ENCODE measurements at regions of chr5 and their contacts with region 1.

Region 1: DNA sequence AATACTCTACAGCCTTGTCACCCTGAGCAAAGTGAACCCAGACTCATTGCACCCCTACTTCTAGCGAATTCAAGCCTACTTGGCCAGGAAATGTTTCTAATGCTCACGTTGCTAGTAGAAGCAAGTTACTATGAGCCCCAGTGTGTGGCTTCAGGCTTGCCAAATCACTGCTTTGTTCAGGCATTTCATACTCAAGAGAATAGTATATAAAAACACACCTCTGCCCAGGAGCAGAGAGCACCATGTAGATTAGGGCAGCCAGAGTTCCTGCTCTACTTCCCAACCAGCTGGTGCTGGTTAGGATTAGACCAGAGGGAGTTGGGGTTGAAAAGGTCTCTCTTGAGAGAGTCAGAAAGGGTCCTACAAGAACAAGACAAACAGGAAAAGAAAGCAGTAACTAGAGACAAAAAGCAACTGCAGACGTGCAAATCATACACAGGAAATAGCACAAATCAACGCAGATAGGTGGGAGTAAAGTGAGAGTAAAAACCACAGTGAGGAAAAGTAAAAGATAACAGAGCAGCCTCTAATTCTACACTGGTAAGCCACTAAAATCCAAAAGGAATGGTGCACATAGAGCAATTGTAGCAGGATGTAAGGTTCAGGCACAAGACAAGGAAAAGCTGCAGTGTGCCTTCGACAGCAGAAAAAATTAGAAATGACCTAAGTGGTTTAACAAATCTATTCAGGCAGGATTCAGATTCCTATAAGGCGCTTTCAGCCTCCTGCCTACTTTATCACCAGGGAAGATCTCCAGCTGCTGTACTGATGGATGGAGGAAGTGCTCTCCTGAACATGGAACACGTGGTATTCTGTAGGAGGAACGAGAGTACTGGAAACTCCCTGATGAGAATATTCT is 49.6 kb upstream of the KIF2A start:
- DNase-seq: peak; percentile 18
- H3K4me3 Mint-ChIP-seq: peak overlapping the region; percentile 21
- H3K27ac Mint-ChIP-seq: peak overlapping the region; percentile 88
- H3K4me1 Mint-ChIP-seq: peaks cover 48% of the 10 kb centered on the region
- H3K27me3 Mint-ChIP-seq: no peaks in the 10 kb centered on the region

Region 2: DNA sequence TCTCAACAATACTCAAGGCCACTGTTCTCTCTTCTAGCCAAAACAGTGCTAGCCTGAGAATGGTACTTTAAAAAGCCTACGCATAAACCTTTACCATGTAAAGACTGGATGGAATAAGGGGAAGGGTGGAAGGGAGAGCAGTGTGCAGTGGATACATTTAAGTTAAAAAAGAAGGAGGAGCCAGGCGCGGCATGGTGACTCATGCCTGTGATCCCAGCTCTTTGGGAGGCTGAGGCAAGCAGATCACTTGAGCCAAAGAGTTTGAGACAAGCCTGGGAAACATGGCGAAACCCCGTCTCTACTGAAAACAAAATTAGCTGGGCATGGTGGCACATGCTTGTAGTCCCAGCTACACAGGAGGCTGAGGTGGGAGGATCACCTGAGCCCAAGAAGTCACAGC is 78.1 kb before region 1 on chr5:
- intact Hi-C with region 1: no loop called
- DNase-seq: no peak
- H3K4me3 Mint-ChIP-seq: no peak overlapping the region
- H3K27ac Mint-ChIP-seq: no peak overlapping the region
- H3K4me1 Mint-ChIP-seq: no peaks in the 10 kb centered on the region
- H3K27me3 Mint-ChIP-seq: peaks cover 9% of the 10 kb centered on the region

Region 3: GRCh38 chr5:62214701-62215100 is 41.7 kb before region 1 on chr5:
- intact Hi-C with region 1: no loop called
- DNase-seq: no peak
- H3K4me3 Mint-ChIP-seq: no peak overlapping the region
- H3K27ac Mint-ChIP-seq: no peak overlapping the region
- H3K4me1 Mint-ChIP-seq: no peaks in the 10 kb centered on the region
- H3K27me3 Mint-ChIP-seq: peaks cover 21% of the 10 kb centered on the region

Region 4: DNA sequence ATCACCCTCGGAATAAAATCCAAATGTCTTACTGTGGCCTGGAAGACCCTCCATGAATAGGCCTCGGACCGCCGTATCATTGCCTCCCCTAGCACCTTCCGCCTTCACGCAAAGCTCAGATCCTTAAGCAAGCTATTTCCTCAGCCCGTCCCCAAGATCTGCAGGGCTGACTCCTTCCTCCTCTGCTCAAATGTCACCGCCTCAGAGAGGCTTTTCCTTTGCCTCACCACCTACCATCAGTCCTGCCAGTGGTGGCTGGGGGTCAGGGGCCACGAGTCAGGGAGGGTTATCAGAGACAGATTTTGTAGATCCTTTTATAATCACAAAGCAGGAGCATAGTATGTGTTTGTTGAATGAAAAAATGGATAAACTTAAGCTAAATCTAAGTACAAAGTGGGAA is 24.8 kb before region 1 on chr5:
- intact Hi-C with region 1: loop called (anchors 1 kb)
- DNase-seq: no peak
- H3K4me3 Mint-ChIP-seq: no peak overlapping the region
- H3K27ac Mint-ChIP-seq: no peak overlapping the region
- H3K4me1 Mint-ChIP-seq: peaks cover 58% of the 10 kb centered on the region
- H3K27me3 Mint-ChIP-seq: no peaks in the 10 kb centered on the region

Region 5: DNA sequence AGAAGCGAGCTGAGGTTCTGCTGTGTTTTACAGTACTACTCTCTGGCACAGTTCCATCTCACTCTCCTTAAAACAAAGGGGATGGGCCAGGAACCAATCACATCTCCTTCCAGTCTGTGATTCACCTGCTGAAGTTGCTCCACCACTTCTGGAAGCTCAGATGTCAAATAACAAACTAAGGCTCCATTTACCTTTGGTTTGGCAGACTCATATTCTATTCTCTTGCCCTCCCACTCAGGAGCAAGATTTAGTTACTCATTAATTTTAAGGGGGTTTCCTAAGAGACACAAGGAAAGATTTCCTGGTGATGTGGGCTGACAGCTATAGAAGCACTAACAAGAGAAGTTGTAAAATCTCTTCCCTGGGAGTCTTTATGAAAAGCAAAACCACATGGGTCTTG is 11.8 kb after region 1 on chr5:
- intact Hi-C with region 1: loop called (anchors 1 kb)
- DNase-seq: no peak
- H3K4me3 Mint-ChIP-seq: no peak overlapping the region
- H3K27ac Mint-ChIP-seq: peak overlapping the region; percentile 46
- H3K4me1 Mint-ChIP-seq: peaks cover 59% of the 10 kb centered on the region
- H3K27me3 Mint-ChIP-seq: no peaks in the 10 kb centered on the region

Measured in activated T-helper 1 cell treated with anti-CD3 and anti-CD28 coated beads, Interleukin-12 subunit alpha, Interleukin-12 subunit beta, Interleukin-2, Interleukin-4 antibody, amounts not matched to agents 30 ng/mL and 10 ng/mL and 1 ng/mL, durations not matched to agents 14 hours and 24 hours and 36 hours (primary cell).